ENCODE measurements at regions of chr12 and their contacts with region 1.

Region 1: DNA sequence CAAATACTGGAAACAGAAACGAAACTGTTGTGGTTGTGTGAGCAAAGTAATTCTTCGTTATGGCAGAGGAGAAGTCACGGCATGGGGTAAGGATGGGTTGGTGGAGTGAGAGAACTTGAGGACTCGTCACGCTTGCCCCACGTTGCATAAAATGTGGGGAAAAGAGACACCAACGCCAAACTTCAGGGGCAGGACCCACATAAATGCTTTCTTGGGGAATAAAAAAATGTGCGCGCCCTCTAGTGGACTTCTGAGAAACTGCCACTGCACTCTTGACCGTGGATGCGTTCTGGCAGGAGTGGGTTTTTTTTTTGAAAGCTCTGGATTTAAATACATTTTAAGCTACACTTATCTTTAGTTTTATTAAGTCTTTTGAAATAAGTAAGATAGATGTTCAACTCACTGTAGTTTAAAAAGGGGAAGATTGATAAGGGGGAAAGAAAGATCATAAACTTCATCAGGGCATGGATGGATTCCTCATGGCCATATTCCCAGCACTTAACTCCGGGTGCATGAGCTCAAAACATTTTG is 4.1 kb upstream of the IGF1 start:
- DNase-seq: peak; percentile 50
- ATAC-seq: peak; percentile 64 to 70
- H3K4me3 ChIP-seq: peak overlapping the region; percentile 30
- H3K27ac ChIP-seq: peak overlapping the region; percentile 61
- H3K4me1 ChIP-seq: peaks cover 18% of the 10 kb centered on the region
- H3K27me3 ChIP-seq: no peaks in the 10 kb centered on the region
- CTCF ChIP-seq: peak; percentile 92

Region 2: GRCh38 chr12:101939856-101940265 is 544.6 kb before region 1 on chr12:
- intact Hi-C with region 1: loop called (anchors 5 kb)
- DNase-seq: no peak
- ATAC-seq: peak; percentile 78 to 87
- H3K4me3 ChIP-seq: no peak overlapping the region
- H3K27ac ChIP-seq: no peak overlapping the region
- H3K4me1 ChIP-seq: peaks cover 22% of the 10 kb centered on the region
- H3K27me3 ChIP-seq: no peaks in the 10 kb centered on the region
- CTCF ChIP-seq: peak; percentile 68

Measured in lower lobe of right lung (tissue), 2 donors.